ENCODE measurements at regions of chr16 and their contacts with region 1.

Region 1: DNA sequence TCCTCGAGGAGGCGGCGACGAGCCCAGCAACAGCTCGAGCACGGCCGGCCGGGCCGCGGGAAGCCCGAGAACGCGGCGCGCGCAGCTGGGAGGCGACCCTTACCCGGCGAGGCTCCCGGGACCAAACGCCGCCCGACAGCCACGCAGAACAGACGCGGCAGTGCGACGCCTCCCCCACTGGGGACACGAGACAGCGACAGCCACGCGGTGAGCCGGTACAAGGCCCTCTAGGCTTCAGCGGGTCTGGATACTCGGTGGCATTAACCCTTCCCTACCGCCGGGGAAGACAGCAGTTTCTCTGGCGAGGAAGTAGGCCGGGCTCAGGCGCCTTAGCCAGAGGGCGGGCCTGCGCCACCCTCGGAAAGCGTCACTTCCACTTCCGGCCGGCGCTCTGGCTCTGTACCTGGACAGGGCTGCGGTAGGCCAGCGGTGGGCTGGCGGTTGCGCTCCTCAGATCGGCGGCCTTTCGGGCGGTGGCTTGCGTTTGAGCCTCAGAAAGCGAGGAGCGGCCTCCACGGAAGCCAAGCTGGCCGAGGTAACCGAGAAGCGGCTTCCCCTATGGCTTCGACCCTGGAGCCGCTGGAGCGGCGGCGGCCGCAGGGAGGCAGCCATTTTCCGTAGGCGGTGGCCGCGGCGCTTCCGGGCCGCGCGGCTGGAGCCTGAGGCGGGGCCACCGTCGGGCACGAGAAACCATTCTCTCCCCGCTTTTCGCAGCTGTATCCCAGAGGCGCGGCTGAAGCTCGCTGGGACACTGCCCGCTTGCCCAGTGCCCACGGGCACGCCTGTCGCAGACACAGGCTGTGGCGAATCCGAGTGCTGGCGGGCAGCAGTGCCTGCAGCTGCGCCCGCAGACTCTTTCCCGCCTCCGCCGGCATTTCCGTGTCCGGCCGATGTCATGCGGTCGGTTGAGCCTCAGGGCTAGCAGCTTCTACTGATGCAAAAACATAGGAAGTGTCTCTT is at the starts of genes TIGD7 and ZNF75A:
- DNase-seq: peak; percentile 78 to 86
- H3K4me3 ChIP-seq: peak within 1 kb of the TSS; percentile 94
- H3K27ac ChIP-seq: peak within 1 kb of the TSS; percentile 73
- H3K4me1 ChIP-seq: peaks cover 6% of the 10 kb centered on the region; the same call in 1 of the 2 replicates
- H3K27me3 ChIP-seq: no peaks in the 10 kb centered on the region
- CTCF ChIP-seq: no peak
- total RNA-seq, gene TIGD7: 8.7 and 10.9 TPM in 2 replicates
- total RNA-seq, gene ZNF75A: 32.2 and 35.2 TPM in 2 replicates

Region 2: GRCh38 chr16:3328643-3329042 is 23.3 kb after region 1 on chr16:
- CTCF ChIA-PET with region 1: no interaction called
- POLR2A ChIA-PET with region 1: interaction called, 11 read pairs
- intact Hi-C with region 1: no loop called
- DNase-seq: no peak
- H3K4me3 ChIP-seq: no peak overlapping the region
- H3K27ac ChIP-seq: no peak overlapping the region
- H3K4me1 ChIP-seq: no peaks in the 10 kb centered on the region
- H3K27me3 ChIP-seq: peaks cover 17% of the 10 kb centered on the region; the same call in 1 of the 2 replicates
- CTCF ChIP-seq: no peak

Region 3: GRCh38 chr16:3400779-3401688 is 95.6 kb after region 1 on chr16 and contains the starts of genes ZNF174 and ZSCAN32:
- CTCF ChIA-PET with region 1: no interaction called
- POLR2A ChIA-PET with region 1: no interaction called
- intact Hi-C with region 1: loop called (anchors 5 kb)
- DNase-seq: peak; percentile 98 to 100
- H3K4me3 ChIP-seq: peak within 1 kb of the TSS; percentile 74
- H3K27ac ChIP-seq: peak within 1 kb of the TSS; percentile 40; the same call in 1 of the 2 replicates
- H3K4me1 ChIP-seq: peaks cover 12% of the 10 kb centered on the region; the same call in 1 of the 2 replicates
- H3K27me3 ChIP-seq: no peaks in the 10 kb centered on the region
- CTCF ChIP-seq: no peak
- total RNA-seq, gene ZNF174: 12.1 and 13.2 TPM in 2 replicates
- total RNA-seq, gene ZSCAN32: 15.5 and 16.4 TPM in 2 replicates

Measured in PC-9 (cell line).